CD8-positive, alpha-beta memory T cell (primary cell): ENCODE measurements at regions of chr7 and their contacts with region 1.

Region 1: GRCh38 chr7:74183613-74184450 is 9.7 kb downstream of the EIF4H start:
- DNase-seq: peak in 1 of 5 donors; percentile 54
- H3K4me3 ChIP-seq: no peak overlapping the region
- H3K4me3 Mint-ChIP-seq: peak overlapping the region; percentile 0 to 76 (median 54)
- H3K27ac ChIP-seq: no peak overlapping the region
- H3K27ac Mint-ChIP-seq: peak overlapping the region; percentile 3 to 89 (median 56)
- H3K4me1 ChIP-seq: peaks cover 69% of the 10 kb centered on the region
- H3K4me1 Mint-ChIP-seq: peaks cover 83 to 97% (median 91%) of the 10 kb centered on the region in 3 donors
- H3K27me3 ChIP-seq: no peaks in the 10 kb centered on the region
- H3K27me3 Mint-ChIP-seq: no peaks in the 10 kb centered on the region

Region 2: GRCh38 chr7:74068393-74069085 is 115.3 kb before region 1 on chr7:
- CTCF ChIA-PET with region 1: interaction called, 11 read pairs
- POLR2A ChIA-PET with region 1: no interaction called
- DNase-seq: no peak
- H3K4me3 ChIP-seq: no peak overlapping the region
- H3K4me3 Mint-ChIP-seq: no peak overlapping the region
- H3K27ac ChIP-seq: no peak overlapping the region
- H3K27ac Mint-ChIP-seq: peak overlapping the region in 2 of 8 donors; percentile 68 to 90
- H3K4me1 ChIP-seq: peaks cover 3% of the 10 kb centered on the region
- H3K4me1 Mint-ChIP-seq: no peaks in the 10 kb centered on the region
- H3K27me3 ChIP-seq: no peaks in the 10 kb centered on the region
- H3K27me3 Mint-ChIP-seq: peaks cover 0 to 1% of the 10 kb centered on the region in 2 donors